Gastrocnemius medialis (tissue), 4 donors: ENCODE measurements at regions of chr7 and their contacts with region 1.

Region 1: DNA sequence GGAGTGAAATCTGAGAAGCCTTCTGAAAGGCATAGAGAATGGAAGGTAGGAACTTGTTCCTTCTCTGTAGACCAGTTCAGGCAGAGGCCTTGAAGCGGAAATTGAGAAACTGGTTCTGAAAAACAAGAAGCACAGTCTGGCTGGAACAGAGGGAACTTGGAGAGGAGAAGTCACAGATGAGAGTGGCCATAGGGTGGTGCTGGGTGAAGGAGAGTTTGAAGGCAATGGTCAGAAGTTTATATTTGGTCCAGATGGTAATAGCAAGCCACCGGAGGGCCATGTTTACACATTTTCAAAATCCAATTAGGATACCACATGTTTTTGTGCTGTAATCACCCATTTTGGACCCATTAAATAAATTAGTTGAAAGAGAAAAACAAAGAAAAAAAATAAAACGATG is 692.5 kb downstream of the INHBA start:
- DNase-seq: peak; percentile 40 to 46
- ATAC-seq: peak; percentile 79
- H3K4me3 ChIP-seq: no peak overlapping the region
- H3K27ac ChIP-seq: peak overlapping the region; percentile 16 to 43 (median 34)
- H3K4me1 ChIP-seq: peaks cover 0 to 4% of the 10 kb centered on the region in 2 donors
- H3K27me3 ChIP-seq: no peaks in the 10 kb centered on the region
- CTCF ChIP-seq: no peak
- POLR2A ChIP-seq: no peak

Region 2: DNA sequence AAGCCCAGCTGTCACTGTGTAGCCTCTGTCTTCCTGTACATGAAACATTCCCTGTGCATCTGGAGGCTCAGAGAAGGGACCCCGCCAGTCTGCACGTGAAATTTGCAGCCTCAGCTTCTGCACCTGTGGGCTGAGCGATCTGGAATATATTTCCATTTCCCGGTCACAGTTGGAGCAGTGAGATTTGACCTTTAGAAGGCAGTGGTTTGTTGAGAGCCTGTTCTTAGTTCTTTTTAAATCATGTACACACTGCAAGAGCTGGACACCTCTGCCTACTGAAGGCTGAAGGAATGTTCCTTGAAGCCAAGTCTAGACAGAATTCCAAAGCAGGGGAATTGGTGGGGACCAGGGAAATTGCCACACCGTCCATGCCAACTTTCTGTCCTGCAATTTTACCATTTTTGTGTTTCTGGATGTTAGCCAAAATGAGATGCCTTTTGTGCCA is 14.2 kb before region 1 on chr7:
- in situ Hi-C with region 1: no loop called
- intact Hi-C with region 1: no loop called
- DNase-seq: no peak
- ATAC-seq: no peak
- H3K4me3 ChIP-seq: no peak overlapping the region
- H3K27ac ChIP-seq: no peak overlapping the region
- H3K4me1 ChIP-seq: no peaks in the 10 kb centered on the region
- H3K27me3 ChIP-seq: no peaks in the 10 kb centered on the region
- CTCF ChIP-seq: no peak
- POLR2A ChIP-seq: no peak

Region 3: GRCh38 chr7:41045556-41046123 is 35.2 kb after region 1 on chr7:
- in situ Hi-C with region 1: no loop called
- intact Hi-C with region 1: loop called (anchors 5 kb)
- DNase-seq: no peak
- ATAC-seq: no peak
- H3K4me3 ChIP-seq: no peak overlapping the region
- H3K27ac ChIP-seq: peak overlapping the region in 2 of 4 donors; percentile 18 to 26
- H3K4me1 ChIP-seq: no peaks in the 10 kb centered on the region
- H3K27me3 ChIP-seq: no peaks in the 10 kb centered on the region
- CTCF ChIP-seq: no peak
- POLR2A ChIP-seq: no peak